Activated CD8-positive, alpha-beta memory T cell treated with anti-CD3 and anti-CD28 coated beads, Interleukin-2, amount 10 ng/mL, durations not matched to agents 7 days and 5 days (primary cell): ENCODE measurements at regions of chr11 and their contacts with region 1.

Region 1: DNA sequence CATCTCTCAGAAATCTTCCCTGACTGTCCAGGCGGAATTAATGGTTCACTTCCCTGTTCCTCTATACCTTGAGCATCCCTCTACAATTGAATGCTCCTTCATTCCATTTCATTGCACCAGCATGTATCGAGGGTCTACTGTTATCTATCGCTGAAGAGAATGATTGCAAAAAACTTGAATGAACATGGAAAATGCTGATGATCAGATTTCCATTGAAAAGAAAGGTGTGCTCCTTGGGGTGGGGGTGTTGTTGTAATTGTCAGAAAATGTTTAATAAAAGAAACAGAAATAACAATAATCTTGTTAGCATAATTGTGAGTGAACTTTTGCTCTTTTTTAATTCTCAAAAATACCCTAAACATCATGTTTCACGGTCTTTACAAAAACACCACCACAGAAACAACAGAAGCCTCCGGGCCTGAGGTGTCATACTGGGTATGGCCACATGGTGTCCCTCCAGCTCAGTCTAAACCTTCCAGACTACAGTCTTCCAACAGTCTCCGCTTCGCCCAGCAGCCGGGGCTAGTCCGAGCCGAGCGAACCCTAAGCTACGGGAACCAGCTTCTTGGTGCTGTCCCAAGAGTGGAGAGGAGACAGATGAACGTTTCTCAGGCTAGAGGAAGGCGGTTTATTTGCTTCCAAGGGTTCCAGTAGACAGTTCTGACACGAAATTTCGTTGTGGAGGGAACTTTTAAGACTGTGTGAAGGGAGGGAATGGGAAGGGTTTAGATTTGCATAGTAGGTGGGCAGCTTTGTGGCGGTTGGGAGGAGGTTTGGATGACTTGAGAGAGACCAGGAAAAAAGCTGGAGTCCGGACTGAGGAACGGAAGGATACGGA is 75.8 kb upstream of the ZBED5 start:
- DNase-seq: peak; percentile 86
- ATAC-seq: peak; percentile 80
- H3K4me3 Mint-ChIP-seq: peak overlapping the region; percentile 66
- H3K27ac Mint-ChIP-seq: no peak overlapping the region
- H3K4me1 Mint-ChIP-seq: peaks cover 20% of the 10 kb centered on the region
- H3K27me3 Mint-ChIP-seq: peaks cover 47% of the 10 kb centered on the region

Region 2: DNA sequence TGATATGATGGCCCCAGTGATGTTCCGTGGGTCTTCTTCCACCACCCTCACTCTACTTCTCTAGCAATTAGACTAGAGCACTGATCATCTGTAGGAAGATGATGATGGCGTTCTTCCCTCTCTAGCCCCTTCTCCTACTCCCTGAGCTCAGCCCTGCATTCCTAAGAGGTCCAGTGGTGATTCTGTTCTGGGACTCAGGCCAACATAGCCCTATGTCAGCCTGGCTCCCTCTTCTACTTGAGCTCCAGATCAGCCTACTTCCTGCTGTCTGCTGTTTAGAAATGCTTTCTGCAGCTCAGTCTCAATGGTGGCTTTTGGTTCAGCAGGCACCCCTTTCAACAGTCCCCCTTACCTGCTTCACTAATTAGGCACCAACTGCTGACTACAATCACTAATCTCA is 10.3 kb after region 1 on chr11:
- CTCF ChIA-PET with region 1: interaction called, 18 read pairs
- DNase-seq: no peak
- ATAC-seq: no peak
- H3K4me3 Mint-ChIP-seq: no peak overlapping the region
- H3K27ac Mint-ChIP-seq: no peak overlapping the region
- H3K4me1 Mint-ChIP-seq: peaks cover 4% of the 10 kb centered on the region
- H3K27me3 Mint-ChIP-seq: peaks cover 20% of the 10 kb centered on the region

Region 3: GRCh38 chr11:10982704-10983510 is 49.2 kb after region 1 on chr11:
- CTCF ChIA-PET with region 1: no interaction called
- DNase-seq: no peak
- ATAC-seq: no peak
- H3K4me3 Mint-ChIP-seq: no peak overlapping the region
- H3K27ac Mint-ChIP-seq: no peak overlapping the region
- H3K4me1 Mint-ChIP-seq: no peaks in the 10 kb centered on the region
- H3K27me3 Mint-ChIP-seq: peaks cover 17% of the 10 kb centered on the region

Region 4: GRCh38 chr11:11016068-11016467 is 82.4 kb after region 1 on chr11:
- CTCF ChIA-PET with region 1: interaction called, 23 read pairs
- DNase-seq: no peak
- ATAC-seq: no peak
- H3K4me3 Mint-ChIP-seq: no peak overlapping the region
- H3K27ac Mint-ChIP-seq: no peak overlapping the region
- H3K4me1 Mint-ChIP-seq: peaks cover 1% of the 10 kb centered on the region
- H3K27me3 Mint-ChIP-seq: peaks cover 12% of the 10 kb centered on the region

Region 5: DNA sequence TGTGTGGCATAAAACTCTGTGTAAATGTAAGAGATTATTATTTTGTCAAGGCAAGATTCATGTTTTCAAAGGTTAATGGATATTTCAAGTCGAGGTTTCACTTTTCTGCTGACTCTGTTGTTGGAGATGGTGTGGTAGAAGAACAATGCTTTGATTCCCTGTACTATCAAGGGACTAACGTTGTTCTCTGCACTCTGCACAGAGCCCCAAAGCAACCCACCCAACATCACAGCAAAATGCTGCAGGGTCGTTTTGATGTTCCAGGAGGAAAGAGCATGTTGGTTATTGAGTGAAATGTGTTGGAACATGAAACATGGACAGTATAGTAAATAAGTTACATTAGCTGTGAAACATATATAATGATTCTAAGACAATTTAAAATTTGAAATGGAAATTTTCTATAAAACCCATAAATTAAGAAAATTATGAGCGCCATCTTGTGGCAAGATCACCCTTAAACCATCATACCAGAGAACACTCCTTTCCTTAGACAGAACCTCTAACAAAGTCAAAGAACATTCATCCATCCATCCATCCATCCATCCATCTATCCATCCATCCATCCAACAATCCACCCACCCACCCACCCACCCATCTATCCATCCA is 88.6 kb after region 1 on chr11:
- CTCF ChIA-PET with region 1: interaction called, 26 read pairs
- DNase-seq: no peak
- ATAC-seq: no peak
- H3K4me3 Mint-ChIP-seq: no peak overlapping the region
- H3K27ac Mint-ChIP-seq: no peak overlapping the region
- H3K4me1 Mint-ChIP-seq: peaks cover 1% of the 10 kb centered on the region
- H3K27me3 Mint-ChIP-seq: no peaks in the 10 kb centered on the region

Region 6: DNA sequence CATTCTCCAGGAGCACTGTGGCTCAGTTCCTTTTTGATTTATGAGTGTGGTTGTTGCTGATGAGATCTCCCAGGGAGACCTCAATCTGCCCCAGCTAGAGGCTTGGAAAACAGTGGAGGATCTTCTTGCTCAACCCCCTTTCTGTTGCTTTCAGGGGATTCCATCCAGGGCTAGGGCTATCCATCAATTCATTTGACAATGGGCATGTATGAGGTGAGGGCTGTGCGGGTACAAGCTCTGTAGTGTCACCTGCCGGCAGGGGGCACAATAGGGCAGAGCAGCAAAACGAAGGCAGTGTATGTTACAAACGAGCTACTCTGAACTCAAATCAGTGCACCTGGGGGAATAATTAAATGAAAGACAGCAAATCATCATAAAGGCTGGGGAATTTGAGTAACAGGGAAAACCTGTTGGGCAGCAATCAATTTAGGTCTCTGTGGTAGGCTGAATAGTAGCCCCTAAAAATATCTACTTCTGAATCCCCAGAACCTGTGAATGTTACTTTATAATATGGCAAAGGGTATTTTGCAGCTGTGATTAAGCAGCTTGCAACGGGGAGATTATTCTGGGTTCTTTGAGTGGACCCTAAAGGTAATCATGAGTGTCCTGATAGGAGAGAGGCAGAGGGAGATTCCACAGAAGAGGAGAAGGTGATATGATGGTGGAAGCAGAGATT is 94.5 kb after region 1 on chr11:
- CTCF ChIA-PET with region 1: interaction called, 26 read pairs
- DNase-seq: peak; percentile 78
- ATAC-seq: peak; percentile 89
- H3K4me3 Mint-ChIP-seq: no peak overlapping the region
- H3K27ac Mint-ChIP-seq: no peak overlapping the region
- H3K4me1 Mint-ChIP-seq: no peaks in the 10 kb centered on the region
- H3K27me3 Mint-ChIP-seq: peaks cover 13% of the 10 kb centered on the region

Region 7: GRCh38 chr11:11075515-11076171 is 142.0 kb after region 1 on chr11:
- CTCF ChIA-PET with region 1: no interaction called
- DNase-seq: no peak
- ATAC-seq: no peak
- H3K4me3 Mint-ChIP-seq: no peak overlapping the region
- H3K27ac Mint-ChIP-seq: no peak overlapping the region
- H3K4me1 Mint-ChIP-seq: no peaks in the 10 kb centered on the region
- H3K27me3 Mint-ChIP-seq: peaks cover 20% of the 10 kb centered on the region

Region 8: GRCh38 chr11:11787305-11788062 is 853.8 kb after region 1 on chr11:
- CTCF ChIA-PET with region 1: interaction called, 13 read pairs
- DNase-seq: peak; percentile 73
- ATAC-seq: peak; percentile 85
- H3K4me3 Mint-ChIP-seq: no peak overlapping the region
- H3K27ac Mint-ChIP-seq: no peak overlapping the region
- H3K4me1 Mint-ChIP-seq: peaks cover 12% of the 10 kb centered on the region
- H3K27me3 Mint-ChIP-seq: peaks cover 19% of the 10 kb centered on the region